Activated B cell treated with CpG ODN at 0.5 μM for 24 hours (primary cell): ENCODE measurements at regions of chr6 and their contacts with region 1.

Region 1: DNA sequence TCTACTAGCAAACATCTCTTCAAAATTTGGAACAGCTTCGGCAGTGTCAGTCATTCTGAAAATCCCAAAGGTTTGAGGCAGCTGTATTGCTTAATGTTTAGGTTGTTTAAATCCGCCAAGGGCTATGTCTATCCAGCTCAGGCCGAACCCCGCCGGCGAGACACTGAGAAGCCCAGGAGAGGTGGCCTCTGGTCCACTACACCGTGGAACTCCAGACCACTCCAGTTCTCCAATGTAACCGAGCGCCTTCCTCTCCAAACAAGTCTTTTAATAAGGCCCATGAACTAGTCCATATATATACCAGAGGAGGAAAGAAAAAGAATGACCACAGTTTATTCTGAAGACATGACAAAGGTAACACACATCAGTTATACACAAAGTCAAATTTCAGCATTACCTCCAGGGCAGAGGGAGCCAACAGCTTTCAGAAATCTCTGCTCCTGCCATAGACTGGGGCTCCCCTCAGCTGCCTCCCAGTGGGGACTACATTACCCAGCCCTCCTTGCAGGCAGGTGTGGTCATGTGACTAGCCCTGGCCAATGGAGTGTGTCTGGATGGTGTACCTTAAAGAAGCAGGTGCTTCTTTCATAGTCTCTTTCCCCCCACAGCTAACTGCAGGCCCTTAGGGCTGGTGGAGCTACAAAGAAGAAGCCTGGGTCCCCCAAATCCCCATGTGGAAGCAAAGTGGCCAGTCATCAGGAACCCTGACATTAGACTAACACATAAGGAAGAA is at the start of gene RAMACL:
- DNase-seq: no peak
- ATAC-seq: peak; percentile 60
- H3K4me3 Mint-ChIP-seq: no peak within 1 kb of the TSS
- H3K27ac Mint-ChIP-seq: peak within 1 kb of the TSS; percentile 71
- H3K4me1 Mint-ChIP-seq: peaks cover 42% of the 10 kb centered on the region
- H3K27me3 Mint-ChIP-seq: no peaks in the 10 kb centered on the region
- CTCF ChIP-seq: no peak
- total RNA-seq, gene RAMACL: 1.8 and 2.3 TPM in 2 replicates

Region 2: DNA sequence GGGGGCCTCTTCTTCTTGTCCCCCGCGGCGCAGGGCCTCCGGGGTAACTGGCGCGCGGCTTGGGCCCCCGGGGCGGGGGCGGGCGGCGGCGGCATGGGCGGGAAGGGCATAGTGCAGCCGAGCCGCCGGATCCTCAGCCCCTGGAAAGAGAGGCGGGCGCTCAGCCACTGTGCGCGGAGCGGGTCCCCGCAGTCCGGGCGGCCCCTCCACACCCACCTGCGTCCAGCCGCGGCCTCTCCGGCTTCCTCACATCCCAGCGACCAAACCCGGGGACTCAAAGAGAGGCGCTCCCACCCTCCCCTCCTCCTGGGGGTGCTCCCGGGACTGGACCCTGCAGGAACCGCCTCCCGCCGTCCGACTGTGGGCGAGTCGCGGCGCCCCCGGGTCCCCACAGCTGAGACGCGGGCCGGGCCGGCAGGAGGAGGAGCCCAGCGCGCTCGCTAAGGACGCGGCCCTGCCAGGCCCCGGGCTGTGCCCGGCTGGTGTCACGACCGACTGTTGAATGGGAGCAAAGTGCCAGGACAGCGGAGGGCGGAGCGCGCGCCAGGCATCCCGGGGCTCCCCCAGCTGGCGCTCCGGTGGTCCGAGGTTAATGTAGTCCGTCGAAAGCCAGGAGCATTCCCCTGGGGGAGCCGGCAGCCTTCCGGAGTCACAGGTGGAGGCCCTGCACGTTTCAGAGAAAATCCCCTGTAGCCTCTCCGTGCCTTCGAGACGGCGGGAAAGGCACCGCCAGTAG is 278.4 kb before region 1 on chr6 and contains the start of gene PRR18:
- CTCF ChIA-PET with region 1: no interaction called
- POLR2A ChIA-PET with region 1: no interaction called
- intact Hi-C with region 1: no loop called
- DNase-seq: peak; percentile 37
- ATAC-seq: peak; percentile 65
- H3K4me3 Mint-ChIP-seq: peak within 1 kb of the TSS; percentile 78
- H3K27ac Mint-ChIP-seq: no peak within 1 kb of the TSS
- H3K4me1 Mint-ChIP-seq: peaks cover 8% of the 10 kb centered on the region
- H3K27me3 Mint-ChIP-seq: peaks cover 28% of the 10 kb centered on the region
- CTCF ChIP-seq: no peak
- total RNA-seq, gene PRR18: 0.10 TPM in 1 of 2 replicates, not detected in the other

Region 3: DNA sequence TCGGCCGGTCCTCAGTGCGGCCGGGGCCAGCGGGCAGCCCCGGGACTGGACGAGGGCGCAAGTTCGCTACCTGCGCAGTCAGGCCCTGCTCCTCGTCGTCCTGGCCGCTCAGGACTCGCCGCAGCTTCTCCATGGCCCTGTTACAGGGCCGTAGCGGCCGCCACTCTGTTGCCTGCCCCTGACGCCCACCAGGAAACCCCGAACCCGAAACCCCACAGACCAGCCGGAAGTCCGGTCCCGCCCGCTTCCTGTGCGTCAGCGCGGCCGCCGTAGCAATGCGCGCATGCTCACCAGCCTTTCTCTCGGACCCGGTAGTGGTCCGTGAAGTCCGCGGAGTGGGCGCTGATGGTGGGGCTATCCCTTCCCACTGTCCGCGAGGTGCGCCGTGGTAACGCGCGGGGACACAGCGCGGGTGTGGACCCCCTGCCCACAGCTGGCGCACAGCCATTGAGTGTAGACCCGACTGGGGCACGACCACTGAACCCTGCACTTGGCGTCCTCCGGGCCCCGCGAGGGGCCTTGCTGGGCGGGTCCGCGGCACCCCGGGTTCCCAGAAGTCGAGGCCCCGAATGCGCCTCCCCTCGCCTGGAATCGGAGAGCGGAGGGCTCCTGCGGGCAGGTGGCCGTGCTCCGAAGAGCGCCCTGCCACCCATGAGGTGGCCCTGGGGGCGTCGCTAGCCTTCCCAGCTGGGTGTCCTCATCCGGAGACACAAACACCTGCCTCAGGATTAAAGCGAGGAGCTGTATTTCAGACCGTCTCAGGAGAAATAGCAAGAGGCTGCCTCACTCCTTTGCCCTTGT is 244.0 kb before region 1 on chr6 and contains the start of gene SFT2D1:
- CTCF ChIA-PET with region 1: no interaction called
- POLR2A ChIA-PET with region 1: interaction called, 4 read pairs
- intact Hi-C with region 1: loop called (anchors 2 kb)
- DNase-seq: peak; percentile 84
- ATAC-seq: peak; percentile 77
- H3K4me3 Mint-ChIP-seq: peak within 1 kb of the TSS; percentile 92
- H3K27ac Mint-ChIP-seq: peak within 1 kb of the TSS; percentile 89
- H3K4me1 Mint-ChIP-seq: peaks cover 16% of the 10 kb centered on the region
- H3K27me3 Mint-ChIP-seq: no peaks in the 10 kb centered on the region
- CTCF ChIP-seq: no peak
- total RNA-seq, gene SFT2D1: 44.6 and 49.5 TPM in 2 replicates

Region 4: GRCh38 chr6:166402582-166403277 is 183.9 kb before region 1 on chr6:
- CTCF ChIA-PET with region 1: no interaction called
- POLR2A ChIA-PET with region 1: no interaction called
- intact Hi-C with region 1: no loop called
- DNase-seq: no peak
- ATAC-seq: no peak
- H3K4me3 Mint-ChIP-seq: no peak overlapping the region
- H3K27ac Mint-ChIP-seq: no peak overlapping the region
- H3K4me1 Mint-ChIP-seq: no peaks in the 10 kb centered on the region
- H3K27me3 Mint-ChIP-seq: peaks cover 2% of the 10 kb centered on the region
- CTCF ChIP-seq: no peak

Region 5: DNA sequence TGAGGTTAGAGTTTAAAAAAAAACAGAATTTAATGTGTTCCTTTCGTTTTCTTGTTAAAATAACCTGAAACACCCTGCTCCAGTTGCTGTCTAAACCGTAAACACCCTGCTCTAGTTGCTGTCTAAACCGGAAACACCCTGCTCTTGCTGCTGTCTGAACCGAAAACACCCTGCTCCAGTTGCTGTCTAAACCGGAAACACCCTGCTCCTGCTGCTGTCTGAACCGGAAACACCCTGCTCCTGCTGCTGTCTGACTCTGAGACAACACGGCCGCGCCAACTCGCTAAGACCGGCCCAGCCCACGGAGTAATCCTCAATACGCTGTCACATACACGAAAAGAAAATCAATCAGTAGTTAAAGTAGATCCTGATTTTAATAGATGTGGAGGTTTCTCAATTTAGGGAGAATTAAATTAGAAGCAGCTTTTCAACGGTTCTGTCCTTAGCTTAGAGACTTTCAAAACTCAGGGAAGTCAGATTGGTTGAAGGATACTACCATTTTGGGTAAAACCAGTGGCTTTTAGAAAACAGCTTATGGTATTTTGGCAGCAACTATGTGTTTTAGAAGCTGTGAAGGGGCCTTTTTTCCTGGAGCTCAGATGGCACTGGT is 98.4 kb before region 1 on chr6:
- CTCF ChIA-PET with region 1: no interaction called
- POLR2A ChIA-PET with region 1: no interaction called
- intact Hi-C with region 1: loop called (anchors 2 kb)
- DNase-seq: peak; percentile 37
- ATAC-seq: peak; percentile 97
- H3K4me3 Mint-ChIP-seq: peak overlapping the region; percentile 84
- H3K27ac Mint-ChIP-seq: peak overlapping the region; percentile 97
- H3K4me1 Mint-ChIP-seq: peaks cover 23% of the 10 kb centered on the region
- H3K27me3 Mint-ChIP-seq: no peaks in the 10 kb centered on the region
- CTCF ChIP-seq: no peak

Region 6: DNA sequence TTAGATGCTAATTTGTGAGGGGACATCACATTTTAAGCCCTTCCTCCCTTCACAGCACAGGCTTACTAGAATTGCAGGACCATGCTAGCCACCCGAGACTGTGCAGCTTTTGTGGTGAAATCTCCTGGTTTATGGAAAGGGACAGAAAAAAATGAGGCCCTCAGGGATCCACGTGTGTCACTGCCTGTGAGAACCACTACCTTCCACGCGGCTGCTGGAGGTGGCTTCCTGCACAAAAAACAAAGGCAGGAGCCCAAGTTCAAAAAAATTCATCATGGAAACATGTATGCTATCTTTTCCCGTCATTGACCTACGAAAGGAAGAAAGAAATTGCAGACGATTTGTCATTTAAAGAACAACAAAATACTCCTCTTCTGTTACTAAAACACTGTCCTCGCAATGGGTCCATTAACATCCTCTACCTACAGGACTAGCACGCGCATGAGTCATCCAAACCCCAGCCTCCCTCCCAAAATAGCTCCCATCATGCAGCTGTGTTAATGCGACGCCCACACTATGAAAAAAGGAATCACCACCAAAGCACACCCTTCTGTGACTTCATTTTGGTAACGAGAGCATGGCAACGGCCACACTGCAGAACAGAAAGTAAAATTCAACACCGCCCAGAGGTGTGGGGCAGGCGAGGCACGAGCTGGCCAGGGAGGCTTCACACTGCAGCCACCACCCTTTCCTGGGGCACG is 45.8 kb before region 1 on chr6:
- CTCF ChIA-PET with region 1: no interaction called
- POLR2A ChIA-PET with region 1: interaction called, 12 read pairs
- intact Hi-C with region 1: loop called (anchors 1 kb)
- DNase-seq: peak; percentile 31
- ATAC-seq: peak; percentile 92
- H3K4me3 Mint-ChIP-seq: peak overlapping the region; percentile 78
- H3K27ac Mint-ChIP-seq: peak overlapping the region; percentile 79
- H3K4me1 Mint-ChIP-seq: peaks cover 23% of the 10 kb centered on the region
- H3K27me3 Mint-ChIP-seq: no peaks in the 10 kb centered on the region
- CTCF ChIP-seq: no peak

Region 7: GRCh38 chr6:166751051-166751595 is 164.5 kb after region 1 on chr6:
- CTCF ChIA-PET with region 1: no interaction called
- POLR2A ChIA-PET with region 1: interaction called, 9 read pairs
- intact Hi-C with region 1: loop called (anchors 1 kb)
- DNase-seq: peak; percentile 63
- ATAC-seq: peak; percentile 99
- H3K4me3 Mint-ChIP-seq: peak overlapping the region; percentile 85
- H3K27ac Mint-ChIP-seq: peak overlapping the region; percentile 80
- H3K4me1 Mint-ChIP-seq: peaks cover 28% of the 10 kb centered on the region
- H3K27me3 Mint-ChIP-seq: peaks cover 10% of the 10 kb centered on the region
- CTCF ChIP-seq: no peak